WTC11 (cell line): ENCODE measurements at regions of chr19 and their contacts with region 1.

Region 1: GRCh38 chr19:18450931-18451845 is 13.3 kb upstream of the ISYNA1 start:
- DNase-seq: peak; percentile 95
- ATAC-seq: peak; percentile 83
- H3K4me3 Mint-ChIP-seq: no peak overlapping the region
- H3K27ac Mint-ChIP-seq: no peak overlapping the region; the same call in 1 of the 2 replicates
- H3K4me1 Mint-ChIP-seq: peaks cover 3% of the 10 kb centered on the region; the same call in 1 of the 2 replicates
- H3K27me3 Mint-ChIP-seq: no peaks in the 10 kb centered on the region
- CTCF ChIP-seq: peak; percentile 98

Region 2: GRCh38 chr19:17405250-17406038 is 1045.7 kb before region 1 on chr19 and contains the start of gene BST2:
- CTCF ChIA-PET with region 1: no interaction called
- POLR2A ChIA-PET with region 1: no interaction called
- DNase-seq: no peak
- ATAC-seq: peak; percentile 44
- H3K4me3 Mint-ChIP-seq: peak within 1 kb of the TSS; percentile 74
- H3K27ac Mint-ChIP-seq: peak within 1 kb of the TSS; percentile 87
- H3K4me1 Mint-ChIP-seq: peaks cover 32% of the 10 kb centered on the region
- H3K27me3 Mint-ChIP-seq: no peaks in the 10 kb centered on the region
- CTCF ChIP-seq: no peak
- total RNA-seq, gene BST2: 22.8 to 67.7 TPM (median 61.1 TPM) in 3 replicates

Region 3: GRCh38 chr19:18292810-18293641 is 158.2 kb before region 1 on chr19:
- CTCF ChIA-PET with region 1: no interaction called
- POLR2A ChIA-PET with region 1: no interaction called
- DNase-seq: peak; percentile 95
- ATAC-seq: peak; percentile 55
- H3K4me3 Mint-ChIP-seq: peak overlapping the region; percentile 83
- H3K27ac Mint-ChIP-seq: peak overlapping the region; percentile 93
- H3K4me1 Mint-ChIP-seq: peaks cover 42% of the 10 kb centered on the region
- H3K27me3 Mint-ChIP-seq: no peaks in the 10 kb centered on the region; the same call in 1 of the 2 replicates
- CTCF ChIP-seq: no peak

Region 4: DNA sequence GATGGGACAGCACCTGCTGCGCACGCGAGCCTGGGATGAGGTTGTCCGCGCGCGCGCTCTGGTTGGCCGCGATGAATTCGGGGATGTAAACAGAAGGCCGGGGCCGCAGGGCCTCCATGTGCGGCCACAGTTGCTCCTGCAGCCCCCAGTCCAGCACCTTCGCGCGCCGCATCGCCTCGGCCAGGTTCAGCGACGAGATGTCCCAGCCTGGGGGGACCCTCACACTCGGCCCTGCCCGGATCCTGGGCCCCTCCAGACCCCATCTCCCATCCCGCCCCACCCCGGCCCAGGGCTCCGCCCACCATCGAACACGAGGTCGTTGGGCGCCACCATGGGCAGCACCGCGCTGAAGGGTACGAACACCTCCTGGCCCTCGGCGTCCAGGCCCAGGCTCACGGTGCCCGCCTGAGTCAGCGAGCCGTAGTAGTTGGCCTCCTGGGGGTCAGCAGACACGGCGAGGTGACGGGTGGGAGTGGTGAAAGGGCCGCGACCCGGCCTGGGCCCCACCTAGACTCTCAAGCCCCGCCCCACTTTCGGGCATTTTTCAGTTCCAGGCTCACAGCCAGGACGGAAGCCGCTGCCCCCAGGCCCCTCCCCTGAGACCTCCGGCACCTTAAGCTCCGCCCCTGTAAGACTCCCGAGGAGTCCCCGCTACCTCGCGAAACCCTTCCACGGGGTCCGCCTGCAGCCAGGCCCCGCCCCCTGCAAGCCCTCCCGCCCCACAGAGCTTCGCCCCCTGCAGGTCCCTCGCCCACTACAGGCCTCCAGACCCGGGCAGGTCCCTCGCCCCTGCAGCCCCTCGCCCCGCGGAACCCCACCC is 14.3 kb before region 1 on chr19:
- CTCF ChIA-PET with region 1: interaction called, 11 read pairs
- POLR2A ChIA-PET with region 1: no interaction called
- DNase-seq: peak; percentile 92
- ATAC-seq: peak; percentile 64
- H3K4me3 Mint-ChIP-seq: peak overlapping the region; percentile 66
- H3K27ac Mint-ChIP-seq: peak overlapping the region; percentile 63; the same call in 1 of the 2 replicates
- H3K4me1 Mint-ChIP-seq: peaks cover 34% of the 10 kb centered on the region
- H3K27me3 Mint-ChIP-seq: no peaks in the 10 kb centered on the region
- CTCF ChIP-seq: no peak